ENCODE measurements at regions of chr11 and their contacts with region 1.

Region 1: GRCh38 chr11:65418711-65419459 is 3.7 kb upstream of the NEAT1 start:
- DNase-seq: peak; percentile 95
- H3K4me3 Mint-ChIP-seq: peak overlapping the region; percentile 97
- H3K27ac Mint-ChIP-seq: peak overlapping the region; percentile 99
- H3K4me1 Mint-ChIP-seq: peaks cover 47% of the 10 kb centered on the region
- H3K27me3 Mint-ChIP-seq: peaks cover 5% of the 10 kb centered on the region

Region 2: DNA sequence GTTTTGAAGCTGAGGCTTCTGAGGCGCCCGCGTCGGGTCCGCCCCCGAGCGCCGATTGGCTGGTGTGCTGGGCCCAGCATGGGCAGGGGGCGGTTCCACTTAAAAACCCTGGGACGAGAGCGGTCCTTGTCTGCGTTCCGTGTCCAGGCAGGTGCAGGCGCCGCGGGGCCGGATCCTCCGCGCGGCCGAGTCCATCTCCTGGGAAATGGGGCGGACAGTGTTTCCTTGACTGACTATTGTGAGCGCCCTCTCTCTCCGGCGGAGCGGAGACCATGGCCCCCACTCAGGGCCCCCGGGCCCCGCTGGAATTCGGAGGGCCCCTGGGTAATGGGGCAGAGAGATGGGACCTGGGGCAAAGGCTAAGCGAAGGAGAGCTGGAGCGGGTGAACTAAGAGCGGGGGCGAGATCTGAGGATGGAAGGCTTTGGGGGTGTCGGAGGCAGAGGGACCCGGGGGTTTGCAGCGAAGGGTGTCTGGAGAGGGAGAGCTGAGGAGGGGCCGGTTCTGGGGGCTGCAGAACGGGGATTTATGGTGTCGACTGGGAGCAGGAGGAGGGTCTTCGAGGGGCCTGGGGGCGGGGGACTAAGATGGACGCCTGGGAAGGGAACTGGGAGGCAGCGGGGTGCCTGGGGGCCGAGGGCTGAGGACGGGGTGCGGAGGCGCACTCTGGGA is 307.0 kb before region 1 on chr11 and contains the start of gene TM7SF2:
- CTCF ChIA-PET with region 1: no interaction called
- POLR2A ChIA-PET with region 1: interaction called, 10 read pairs
- DNase-seq: peak; percentile 96
- H3K4me3 Mint-ChIP-seq: peak within 1 kb of the TSS; percentile 87
- H3K27ac Mint-ChIP-seq: peak within 1 kb of the TSS; percentile 80
- H3K4me1 Mint-ChIP-seq: peaks cover 49% of the 10 kb centered on the region
- H3K27me3 Mint-ChIP-seq: no peaks in the 10 kb centered on the region
- total RNA-seq, gene TM7SF2: 27.2 to 28.4 TPM

Region 3: GRCh38 chr11:65280646-65281045 is 138.2 kb before region 1 on chr11:
- CTCF ChIA-PET with region 1: no interaction called
- POLR2A ChIA-PET with region 1: no interaction called
- DNase-seq: no peak
- H3K4me3 Mint-ChIP-seq: no peak overlapping the region
- H3K27ac Mint-ChIP-seq: no peak overlapping the region
- H3K4me1 Mint-ChIP-seq: peaks cover 23% of the 10 kb centered on the region
- H3K27me3 Mint-ChIP-seq: no peaks in the 10 kb centered on the region

Region 4: GRCh38 chr11:65323813-65324212 is 95.1 kb before region 1 on chr11:
- CTCF ChIA-PET with region 1: no interaction called
- POLR2A ChIA-PET with region 1: no interaction called
- DNase-seq: no peak
- H3K4me3 Mint-ChIP-seq: no peak overlapping the region
- H3K27ac Mint-ChIP-seq: no peak overlapping the region
- H3K4me1 Mint-ChIP-seq: no peaks in the 10 kb centered on the region
- H3K27me3 Mint-ChIP-seq: no peaks in the 10 kb centered on the region

Region 5: DNA sequence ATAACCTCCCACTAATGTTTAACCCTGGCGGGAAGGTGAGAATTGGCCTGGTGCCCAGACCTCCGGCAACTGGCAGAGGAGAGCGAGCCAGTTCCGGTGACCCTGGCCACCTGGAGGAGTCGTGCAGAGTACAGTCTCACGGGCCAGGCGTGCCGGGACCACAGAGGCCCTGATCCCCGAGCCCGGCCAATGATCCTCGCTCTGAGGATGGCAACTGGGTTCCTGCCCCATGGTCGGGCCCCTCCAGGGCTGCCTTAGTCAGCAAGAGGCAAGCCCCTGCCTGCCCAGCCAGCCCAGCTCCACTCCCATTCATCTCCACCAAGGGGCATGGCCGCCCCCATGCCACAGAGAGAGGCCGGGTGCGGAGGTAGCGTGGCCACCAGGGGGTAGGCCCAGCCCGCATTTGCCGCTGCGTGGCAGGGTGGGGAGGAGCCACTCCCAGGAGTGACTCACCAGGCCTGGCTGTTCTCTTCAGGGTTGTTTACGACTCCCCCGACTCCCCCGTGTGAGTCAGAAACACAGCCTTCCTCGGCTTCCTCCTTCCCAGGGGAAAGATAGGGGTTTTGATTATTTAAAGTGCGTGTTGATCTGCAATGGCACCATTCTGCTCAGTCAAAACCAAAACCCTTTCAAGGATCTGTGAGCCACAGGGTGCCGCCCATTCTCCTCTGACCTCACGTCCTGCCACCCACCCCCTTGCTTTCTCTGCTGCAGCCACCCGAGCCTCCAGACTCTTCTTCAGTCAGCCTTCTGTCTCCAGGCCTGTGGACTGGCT is 36.7 kb before region 1 on chr11 and contains the start of gene SLC25A45:
- CTCF ChIA-PET with region 1: interaction called, 25 read pairs
- POLR2A ChIA-PET with region 1: interaction called, 501 read pairs
- DNase-seq: peak; percentile 93
- H3K4me3 Mint-ChIP-seq: peak within 1 kb of the TSS; percentile 81
- H3K27ac Mint-ChIP-seq: peak within 1 kb of the TSS; percentile 99
- H3K4me1 Mint-ChIP-seq: peaks cover 59% of the 10 kb centered on the region
- H3K27me3 Mint-ChIP-seq: no peaks in the 10 kb centered on the region
- total RNA-seq, gene SLC25A45: 19.4 to 19.8 TPM

Region 6: GRCh38 chr11:65440831-65441499 is 22.1 kb after region 1 on chr11:
- CTCF ChIA-PET with region 1: interaction called, 4 read pairs
- POLR2A ChIA-PET with region 1: interaction called, 261 read pairs
- DNase-seq: no peak
- H3K4me3 Mint-ChIP-seq: no peak overlapping the region
- H3K27ac Mint-ChIP-seq: peak overlapping the region; percentile 82
- H3K4me1 Mint-ChIP-seq: peaks cover 73% of the 10 kb centered on the region
- H3K27me3 Mint-ChIP-seq: no peaks in the 10 kb centered on the region

Region 7: DNA sequence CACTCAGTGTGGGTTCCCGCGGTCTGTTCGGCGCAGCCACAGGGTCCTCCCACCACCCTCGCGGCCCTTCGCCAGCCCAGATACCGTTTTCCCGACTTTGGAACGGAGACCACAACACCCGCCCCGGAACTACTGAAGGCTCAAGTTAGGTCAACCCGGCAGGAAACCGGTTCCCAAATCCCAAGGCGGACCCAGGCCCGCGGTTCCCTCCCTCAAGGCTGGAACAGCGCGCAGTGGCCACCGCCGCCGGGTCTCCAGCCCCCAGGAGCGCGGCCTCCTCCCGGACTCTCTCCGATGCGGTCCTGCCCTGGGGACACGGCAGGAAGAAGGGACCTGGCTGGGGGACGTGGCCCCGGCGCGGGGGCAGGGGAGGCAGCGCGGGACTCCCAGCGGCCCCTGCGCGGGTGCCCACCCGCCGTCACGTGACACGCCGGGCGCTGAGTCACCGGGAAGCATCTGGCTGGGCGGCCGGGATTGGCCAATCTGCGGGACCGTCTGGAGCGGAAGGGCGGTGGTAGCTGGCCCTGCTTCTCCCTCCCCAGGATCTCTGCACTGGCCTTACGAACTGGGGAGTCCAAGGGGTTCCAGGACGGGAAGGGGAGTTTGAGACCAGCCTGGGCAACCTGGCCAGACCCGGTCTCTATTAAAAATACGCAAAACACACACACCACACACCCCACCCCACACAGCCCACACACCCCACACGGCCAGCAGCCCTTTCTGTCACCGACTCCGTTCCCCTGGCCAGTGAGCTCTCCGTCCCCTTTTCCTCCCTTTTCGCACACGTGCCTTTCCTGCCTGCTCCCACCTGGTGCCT is 58.5 kb after region 1 on chr11:
- CTCF ChIA-PET with region 1: interaction called, 17 read pairs
- POLR2A ChIA-PET with region 1: interaction called, 670 read pairs
- DNase-seq: peak; percentile 92
- H3K4me3 Mint-ChIP-seq: peak overlapping the region; percentile 99
- H3K27ac Mint-ChIP-seq: peak overlapping the region; percentile 98
- H3K4me1 Mint-ChIP-seq: peaks cover 24% of the 10 kb centered on the region
- H3K27me3 Mint-ChIP-seq: peaks cover 4% of the 10 kb centered on the region

Region 8: DNA sequence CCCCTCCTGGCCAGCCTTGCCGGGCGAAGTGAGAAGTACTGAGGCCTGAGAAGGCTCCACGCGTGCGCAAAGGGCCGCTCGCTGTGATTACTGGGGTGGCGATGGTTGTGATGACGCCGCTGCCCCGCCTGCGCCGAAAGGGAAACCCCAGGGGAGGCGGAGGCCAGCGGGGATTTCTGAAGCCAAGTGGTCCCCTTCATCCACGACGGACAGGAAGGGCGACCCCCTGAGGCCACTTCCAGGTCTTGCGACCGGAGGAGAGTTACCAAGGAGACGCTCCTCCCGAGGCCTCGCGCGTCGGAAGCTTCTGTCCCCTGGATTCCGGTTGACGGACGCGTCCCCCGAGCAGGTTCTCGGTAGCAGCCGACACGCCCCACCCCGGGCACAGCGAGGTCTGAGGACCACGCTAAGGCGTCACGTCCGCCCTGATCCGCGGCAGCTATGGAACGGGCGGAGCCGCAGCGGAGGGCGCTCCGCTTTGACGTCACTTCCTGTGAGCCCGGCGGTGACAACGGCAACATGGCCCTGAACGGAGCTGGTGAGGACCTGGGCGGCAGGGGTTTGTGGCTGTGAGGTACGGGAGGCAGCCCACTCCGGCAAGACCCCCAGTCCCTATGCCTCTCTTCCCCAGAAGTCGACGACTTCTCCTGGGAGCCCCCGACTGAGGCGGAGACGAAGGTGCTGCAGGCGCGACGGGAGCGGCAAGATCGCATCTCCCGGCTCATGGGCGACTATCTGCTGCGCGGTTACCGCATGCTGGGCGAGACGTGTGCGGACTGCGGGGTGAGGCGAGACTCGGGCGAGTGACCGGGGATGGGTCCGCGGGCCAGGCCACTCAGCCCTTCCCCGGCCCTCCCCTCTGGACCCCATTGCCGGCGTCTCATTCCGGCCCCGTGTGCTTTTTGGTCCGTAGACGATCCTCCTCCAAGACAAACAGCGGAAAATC is 151.4 kb after region 1 on chr11 and contains the start of gene ZNRD2:
- CTCF ChIA-PET with region 1: interaction called, 3 read pairs
- POLR2A ChIA-PET with region 1: interaction called, 43 read pairs
- DNase-seq: peak; percentile 99
- H3K4me3 Mint-ChIP-seq: peak within 1 kb of the TSS; percentile 100
- H3K27ac Mint-ChIP-seq: peak within 1 kb of the TSS; percentile 99
- H3K4me1 Mint-ChIP-seq: peaks cover 71% of the 10 kb centered on the region
- H3K27me3 Mint-ChIP-seq: no peaks in the 10 kb centered on the region
- total RNA-seq, gene ZNRD2: 25.3 to 27.8 TPM

Region 9: GRCh38 chr11:65646921-65647751 is 228.3 kb after region 1 on chr11:
- CTCF ChIA-PET with region 1: no interaction called
- POLR2A ChIA-PET with region 1: no interaction called
- DNase-seq: no peak
- H3K4me3 Mint-ChIP-seq: no peak overlapping the region
- H3K27ac Mint-ChIP-seq: no peak overlapping the region
- H3K4me1 Mint-ChIP-seq: peaks cover 30% of the 10 kb centered on the region
- H3K27me3 Mint-ChIP-seq: no peaks in the 10 kb centered on the region

Measured in activated CD4-positive, alpha-beta memory T cell treated with anti-CD3 and anti-CD28 coated beads, Interleukin-2, amount 10 ng/mL, durations not matched to agents 7 days and 5 days (primary cell).